Colonic mucosa (tissue), 4 donors: ENCODE measurements at regions of chr1 and their contacts with region 1.

Region 1: DNA sequence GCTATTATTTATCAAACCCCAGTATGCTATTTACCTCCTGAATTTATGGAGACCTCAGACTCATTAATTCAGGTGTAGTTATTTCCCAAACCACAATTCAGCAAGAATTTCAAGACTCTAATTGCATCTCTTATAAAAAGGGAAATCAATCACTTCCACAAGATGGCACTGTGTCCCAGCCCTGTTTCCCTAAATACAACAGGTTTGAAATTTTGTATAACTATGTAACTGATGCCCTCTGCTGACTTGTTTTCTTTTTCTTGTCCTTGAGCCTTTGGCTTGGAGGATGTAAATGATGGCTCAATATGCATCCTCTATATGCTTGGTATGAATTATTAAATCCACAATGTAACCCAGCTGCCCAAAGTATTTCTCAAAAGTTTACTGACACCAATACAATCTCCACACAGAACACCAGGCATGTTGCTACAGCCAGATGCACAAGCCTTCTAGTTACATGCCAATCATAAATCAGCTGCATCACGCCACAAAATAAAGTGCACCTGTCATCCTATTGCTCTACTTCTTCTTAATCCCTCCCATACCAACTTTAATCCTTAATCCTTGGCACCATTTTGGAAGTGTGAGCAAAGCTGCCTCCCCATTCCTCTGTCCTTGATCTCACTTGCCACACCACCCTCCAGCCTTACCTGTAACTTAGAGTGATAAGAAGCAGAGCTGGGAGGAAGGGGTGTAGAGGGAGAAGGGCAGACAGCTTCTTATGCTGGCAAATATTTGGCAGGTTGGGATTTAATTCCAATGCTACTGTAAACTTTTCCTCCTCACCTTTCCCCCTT is 9.0 kb downstream of the C1orf105 start:
- DNase-seq: peak; percentile 53
- H3K4me3 ChIP-seq: no peak overlapping the region
- H3K27ac ChIP-seq: no peak overlapping the region
- H3K4me1 ChIP-seq: no peaks in the 10 kb centered on the region
- H3K27me3 ChIP-seq: no peaks in the 10 kb centered on the region
- CTCF ChIP-seq: peak; percentile 58

Region 2: DNA sequence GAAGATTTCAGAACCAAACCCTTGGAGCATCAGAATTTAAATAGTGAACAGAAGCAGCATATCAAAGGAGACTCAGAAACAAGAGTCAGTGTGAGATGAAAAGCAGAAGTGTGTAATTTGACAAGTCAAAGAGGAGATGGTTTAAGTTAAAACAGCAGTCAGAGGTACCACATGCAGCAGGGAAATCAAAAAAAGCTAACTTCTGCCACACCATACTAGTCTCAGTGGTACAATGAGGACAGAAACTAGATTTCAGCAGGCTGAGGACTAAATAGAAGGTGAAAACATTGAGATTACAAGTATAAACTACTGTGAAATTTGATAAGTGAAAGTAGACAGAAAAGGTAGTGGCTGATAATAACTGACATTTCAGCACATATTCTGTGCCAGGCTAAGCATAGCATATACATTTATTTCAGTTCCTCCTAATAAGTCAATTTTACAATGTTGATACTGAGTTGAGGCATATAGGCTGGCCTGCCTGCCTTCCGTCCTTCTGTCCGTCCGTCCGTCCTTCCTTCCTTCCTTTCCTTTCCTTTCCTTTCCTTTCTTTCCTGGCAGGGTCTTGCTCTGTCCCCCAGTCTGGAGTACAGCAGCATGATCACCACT is 116.0 kb after region 1 on chr1:
- intact Hi-C with region 1: no loop called
- DNase-seq: no peak
- H3K4me3 ChIP-seq: no peak overlapping the region
- H3K27ac ChIP-seq: no peak overlapping the region
- H3K4me1 ChIP-seq: no peaks in the 10 kb centered on the region
- H3K27me3 ChIP-seq: no peaks in the 10 kb centered on the region
- CTCF ChIP-seq: no peak

Region 3: DNA sequence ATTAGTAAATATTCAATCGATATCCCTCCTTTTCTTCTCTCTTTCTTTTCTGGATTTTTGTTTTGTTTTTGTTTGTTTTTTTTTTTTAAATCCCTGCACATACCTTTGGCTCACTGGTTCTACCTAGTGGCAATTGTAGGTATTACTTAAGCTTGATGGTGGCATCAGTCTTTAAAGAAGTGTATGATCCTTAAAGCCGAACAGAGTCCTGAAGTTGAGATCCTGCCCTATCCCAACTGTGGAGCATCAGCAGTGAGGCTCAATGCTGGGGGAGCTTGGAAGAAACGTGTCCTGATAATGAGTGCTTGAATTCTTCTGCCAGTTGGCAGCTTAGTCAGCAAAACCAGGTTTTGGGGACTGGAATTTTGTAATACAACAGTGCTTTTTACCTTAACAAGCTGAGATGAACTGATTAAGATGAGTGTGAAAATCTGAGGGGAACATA is 290.2 kb after region 1 on chr1:
- intact Hi-C with region 1: loop called (anchors 2 kb)
- DNase-seq: no peak
- H3K4me3 ChIP-seq: no peak overlapping the region
- H3K27ac ChIP-seq: no peak overlapping the region
- H3K4me1 ChIP-seq: no peaks in the 10 kb centered on the region
- H3K27me3 ChIP-seq: no peaks in the 10 kb centered on the region
- CTCF ChIP-seq: peak; percentile 83